ENCODE measurements at regions of chr6 and their contacts with region 1.

Region 1: DNA sequence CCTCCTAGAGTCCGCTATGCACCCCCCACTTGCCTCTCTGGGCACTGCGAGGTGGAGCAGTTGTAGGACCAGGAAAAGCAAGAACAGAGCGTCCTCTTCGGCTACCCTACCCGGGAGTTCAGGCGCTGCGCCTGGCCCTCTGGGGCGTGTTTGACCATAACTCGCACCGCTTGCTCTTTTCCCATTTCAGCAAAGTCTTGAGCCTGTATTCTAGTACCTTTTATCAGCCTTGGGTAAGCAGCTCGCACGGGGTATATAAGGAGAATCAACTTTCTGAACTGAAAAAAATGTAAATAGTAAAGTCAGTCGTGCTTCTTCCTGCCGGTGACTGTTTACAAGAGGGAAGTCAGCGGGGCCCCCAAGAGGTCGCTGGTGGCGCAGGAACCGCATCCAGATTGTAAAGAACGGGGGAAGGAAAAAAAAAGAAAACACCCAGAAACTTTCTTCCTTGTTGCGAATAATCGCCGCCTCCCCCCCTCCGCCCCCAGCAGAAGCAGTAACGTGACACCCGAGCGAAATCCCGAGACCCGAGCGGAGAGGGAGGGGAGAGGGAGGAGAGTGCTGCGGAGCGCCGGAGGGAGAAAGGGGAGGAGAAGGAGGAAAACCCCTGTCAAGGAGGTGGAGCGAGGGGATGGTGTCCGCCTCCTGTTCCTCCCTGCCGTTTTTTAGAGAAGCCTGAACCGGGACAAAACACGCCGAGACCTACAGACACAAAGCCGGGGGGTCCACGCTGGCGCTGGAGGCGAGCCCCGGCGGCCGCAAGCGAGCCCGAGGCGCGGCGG is at the start of gene UST:
- DNase-seq: peak in 1 of 2 donors; percentile 96
- H3K4me3 ChIP-seq: peak within 1 kb of the TSS; percentile 74 to 86
- H3K27ac ChIP-seq: peak within 1 kb of the TSS; percentile 95
- H3K4me1 ChIP-seq: peaks cover 22% of the 10 kb centered on the region
- H3K27me3 ChIP-seq: no peaks in the 10 kb centered on the region
- CTCF ChIP-seq: peak in 2 of 3 experiments; percentile 19 to 33
- POLR2A ChIP-seq: peak in 1 of 2 donors; percentile 69
- total RNA-seq, gene UST: 14.2 TPM

Region 2: GRCh38 chr6:148538261-148539190 is 208.0 kb before region 1 on chr6:
- intact Hi-C with region 1: no loop called
- DNase-seq: no peak
- H3K4me3 ChIP-seq: no peak overlapping the region
- H3K27ac ChIP-seq: peak overlapping the region; percentile 70
- H3K4me1 ChIP-seq: no peaks in the 10 kb centered on the region
- H3K27me3 ChIP-seq: no peaks in the 10 kb centered on the region
- CTCF ChIP-seq: no peak
- POLR2A ChIP-seq: no peak

Region 3: GRCh38 chr6:148800535-148800934 is 54.0 kb after region 1 on chr6:
- intact Hi-C with region 1: no loop called
- DNase-seq: no peak
- H3K4me3 ChIP-seq: no peak overlapping the region
- H3K27ac ChIP-seq: no peak overlapping the region
- H3K4me1 ChIP-seq: peaks cover 42% of the 10 kb centered on the region
- H3K27me3 ChIP-seq: no peaks in the 10 kb centered on the region
- CTCF ChIP-seq: no peak
- POLR2A ChIP-seq: no peak

Region 4: GRCh38 chr6:148888856-148889255 is 142.3 kb after region 1 on chr6:
- intact Hi-C with region 1: no loop called
- DNase-seq: no peak
- H3K4me3 ChIP-seq: no peak overlapping the region
- H3K27ac ChIP-seq: no peak overlapping the region
- H3K4me1 ChIP-seq: peaks cover 29% of the 10 kb centered on the region
- H3K27me3 ChIP-seq: no peaks in the 10 kb centered on the region
- CTCF ChIP-seq: no peak
- POLR2A ChIP-seq: no peak

Region 5: DNA sequence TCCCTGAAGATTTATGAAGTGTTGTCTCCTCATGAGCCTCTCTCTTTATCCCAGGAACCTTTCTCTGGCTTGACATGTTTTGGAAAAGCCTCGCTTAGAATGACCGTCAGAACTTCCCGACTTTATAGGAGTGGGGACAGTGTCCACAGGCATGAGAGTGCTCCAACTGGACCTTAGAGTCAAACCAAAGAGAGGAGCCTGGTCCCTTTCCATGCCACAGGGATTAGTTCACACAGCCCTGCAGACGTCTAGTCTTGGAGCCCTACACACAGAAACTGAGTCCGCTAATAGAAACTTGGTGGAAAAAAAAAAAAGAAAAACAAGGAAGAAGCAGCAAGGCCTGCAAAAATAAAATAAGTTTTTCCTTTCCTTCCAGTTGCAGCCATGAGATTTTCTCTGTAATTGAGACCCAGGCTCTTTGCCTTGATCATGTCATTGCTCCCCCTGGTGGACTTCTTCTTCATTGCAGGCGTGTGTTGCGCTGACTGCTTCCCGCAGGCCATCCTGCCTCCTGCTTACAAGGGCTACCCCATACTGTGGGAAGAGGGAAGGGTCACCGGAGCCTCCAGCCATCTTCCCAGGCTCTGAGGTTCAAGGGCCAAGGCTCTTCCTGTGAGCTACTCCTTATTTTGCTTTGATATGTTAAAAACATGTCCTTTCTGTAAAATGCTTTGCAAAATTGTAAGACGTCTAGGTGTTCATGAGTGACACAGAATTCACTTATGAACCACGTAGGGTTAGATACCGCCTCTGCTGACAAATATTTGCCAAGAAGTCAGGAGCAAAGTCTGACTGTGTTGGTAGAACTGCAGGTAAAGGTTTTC is 201.3 kb after region 1 on chr6:
- intact Hi-C with region 1: loop called (anchors 10 kb)
- DNase-seq: no peak
- H3K4me3 ChIP-seq: no peak overlapping the region
- H3K27ac ChIP-seq: no peak overlapping the region
- H3K4me1 ChIP-seq: peaks cover 19% of the 10 kb centered on the region
- H3K27me3 ChIP-seq: no peaks in the 10 kb centered on the region
- CTCF ChIP-seq: peak; percentile 73 to 88 (median 85)
- POLR2A ChIP-seq: no peak